ENCODE measurements at regions of chr2 and their contacts with region 1.

Region 1: DNA sequence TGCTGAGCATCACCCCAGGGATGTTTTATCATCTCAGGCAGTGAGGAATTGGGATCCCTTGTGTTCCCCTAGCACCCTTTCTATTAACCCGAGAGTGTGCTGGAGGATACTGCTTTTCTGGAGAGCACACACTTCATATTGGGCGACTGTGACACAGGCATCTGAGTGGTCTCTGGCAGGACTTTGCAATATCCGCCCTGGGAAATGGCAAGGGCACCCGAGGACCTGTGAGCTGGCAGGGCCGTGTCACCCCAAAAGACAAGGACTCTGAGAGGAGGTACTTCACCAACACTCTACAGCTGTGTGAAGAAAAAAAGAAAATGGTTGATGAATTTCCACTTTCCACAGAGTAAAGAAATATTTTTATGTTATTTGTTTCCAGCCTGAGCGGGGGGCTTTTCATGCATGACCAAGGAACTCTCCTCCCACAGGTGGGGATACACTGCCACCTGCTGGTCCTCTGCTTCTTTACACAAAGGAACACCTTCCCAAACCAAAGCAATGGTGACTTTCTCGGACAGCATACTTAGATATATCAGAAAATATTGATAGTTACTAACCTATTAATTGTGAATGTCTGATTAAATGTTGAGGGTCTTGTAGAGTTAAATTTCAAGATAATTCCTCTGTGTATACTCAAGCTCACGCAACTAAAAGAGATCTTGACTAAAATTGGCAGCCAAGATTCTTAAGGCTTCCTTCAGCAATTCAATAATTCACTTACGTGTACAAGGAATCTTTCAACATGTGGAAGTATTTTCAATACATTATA is 45.9 kb upstream of the REG3G start:
- DNase-seq: no peak
- ATAC-seq: peak; percentile 64
- H3K4me3 ChIP-seq: no peak overlapping the region
- H3K27ac ChIP-seq: no peak overlapping the region
- H3K4me1 ChIP-seq: peaks cover 33% of the 10 kb centered on the region
- H3K27me3 ChIP-seq: no peaks in the 10 kb centered on the region
- CTCF ChIP-seq: peak; percentile 79 to 91 (median 85)
- EP300 ChIP-seq: no peak
- POLR2A ChIP-seq: no peak
- RAD21 ChIP-seq: peak; percentile 91

Region 2: GRCh38 chr2:78281164-78281563 is 698.4 kb before region 1 on chr2:
- CTCF ChIA-PET with region 1: no interaction called
- POLR2A ChIA-PET with region 1: no interaction called
- RAD21 ChIA-PET with region 1: no interaction called
- SMC1A ChIA-PET with region 1: no interaction called
- in situ Hi-C with region 1: no loop called
- intact Hi-C with region 1: loop called (anchors 5 kb)
- DNase-seq: peak; percentile 15
- ATAC-seq: peak; percentile 98
- H3K4me3 ChIP-seq: no peak overlapping the region
- H3K27ac ChIP-seq: no peak overlapping the region
- H3K4me1 ChIP-seq: no peaks in the 10 kb centered on the region
- H3K27me3 ChIP-seq: no peaks in the 10 kb centered on the region
- CTCF ChIP-seq: no peak
- EP300 ChIP-seq: peak in 1 of 2 experiments; percentile 56; a peak in 1 of 4 replicates
- POLR2A ChIP-seq: no peak
- RAD21 ChIP-seq: no peak

Region 3: GRCh38 chr2:78431242-78431641 is 548.3 kb before region 1 on chr2:
- CTCF ChIA-PET with region 1: interaction called, 4 read pairs
- POLR2A ChIA-PET with region 1: no interaction called
- RAD21 ChIA-PET with region 1: no interaction called
- SMC1A ChIA-PET with region 1: interaction called, 3 read pairs
- in situ Hi-C with region 1: no loop called
- intact Hi-C with region 1: loop called (anchors 2 kb)
- DNase-seq: no peak
- ATAC-seq: peak; percentile 71
- H3K4me3 ChIP-seq: no peak overlapping the region
- H3K27ac ChIP-seq: no peak overlapping the region
- H3K4me1 ChIP-seq: no peaks in the 10 kb centered on the region
- H3K27me3 ChIP-seq: no peaks in the 10 kb centered on the region
- CTCF ChIP-seq: peak in 1 of 3 experiments; percentile 25; a peak in 1 of 6 replicates
- EP300 ChIP-seq: no peak
- POLR2A ChIP-seq: no peak
- RAD21 ChIP-seq: no peak

Region 4: DNA sequence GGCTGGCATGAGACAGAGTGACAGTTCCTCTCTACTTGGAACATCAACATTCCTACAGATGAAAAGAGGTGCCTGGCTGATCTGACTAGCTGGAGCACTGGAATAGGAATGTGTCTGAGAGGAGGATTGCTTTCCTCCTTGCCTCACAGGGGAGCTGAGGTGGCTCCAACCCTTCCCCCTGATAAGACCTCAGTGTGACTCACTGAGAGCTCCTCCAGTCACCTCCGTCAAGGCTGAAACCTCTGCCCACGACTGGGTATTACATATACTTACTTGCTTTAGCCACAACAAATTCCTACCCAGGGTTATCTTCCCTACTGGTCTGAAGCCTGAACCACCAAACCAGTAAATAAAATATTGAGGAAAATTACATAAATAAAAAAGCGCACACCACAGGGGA is 296.8 kb before region 1 on chr2:
- CTCF ChIA-PET with region 1: interaction called, 101 read pairs
- POLR2A ChIA-PET with region 1: no interaction called
- RAD21 ChIA-PET with region 1: no interaction called
- SMC1A ChIA-PET with region 1: interaction called, 3 read pairs
- in situ Hi-C with region 1: loop called (anchors 5 kb)
- intact Hi-C with region 1: no loop called
- DNase-seq: no peak
- ATAC-seq: no peak
- H3K4me3 ChIP-seq: no peak overlapping the region
- H3K27ac ChIP-seq: no peak overlapping the region
- H3K4me1 ChIP-seq: no peaks in the 10 kb centered on the region
- H3K27me3 ChIP-seq: no peaks in the 10 kb centered on the region
- CTCF ChIP-seq: no peak
- EP300 ChIP-seq: no peak
- POLR2A ChIP-seq: no peak
- RAD21 ChIP-seq: no peak

Region 5: GRCh38 chr2:78928502-78928901 is 51.1 kb before region 1 on chr2:
- CTCF ChIA-PET with region 1: interaction called, 3 read pairs
- POLR2A ChIA-PET with region 1: no interaction called
- RAD21 ChIA-PET with region 1: interaction called, 3 read pairs
- SMC1A ChIA-PET with region 1: interaction called, 3 read pairs
- in situ Hi-C with region 1: no loop called
- intact Hi-C with region 1: loop called (anchors 2 kb)
- DNase-seq: no peak
- ATAC-seq: peak; percentile 84
- H3K4me3 ChIP-seq: no peak overlapping the region
- H3K27ac ChIP-seq: no peak overlapping the region; the same call in 1 of the 2 replicates
- H3K4me1 ChIP-seq: no peaks in the 10 kb centered on the region
- H3K27me3 ChIP-seq: no peaks in the 10 kb centered on the region
- CTCF ChIP-seq: no peak
- EP300 ChIP-seq: no peak
- POLR2A ChIP-seq: no peak
- RAD21 ChIP-seq: no peak

Region 6: DNA sequence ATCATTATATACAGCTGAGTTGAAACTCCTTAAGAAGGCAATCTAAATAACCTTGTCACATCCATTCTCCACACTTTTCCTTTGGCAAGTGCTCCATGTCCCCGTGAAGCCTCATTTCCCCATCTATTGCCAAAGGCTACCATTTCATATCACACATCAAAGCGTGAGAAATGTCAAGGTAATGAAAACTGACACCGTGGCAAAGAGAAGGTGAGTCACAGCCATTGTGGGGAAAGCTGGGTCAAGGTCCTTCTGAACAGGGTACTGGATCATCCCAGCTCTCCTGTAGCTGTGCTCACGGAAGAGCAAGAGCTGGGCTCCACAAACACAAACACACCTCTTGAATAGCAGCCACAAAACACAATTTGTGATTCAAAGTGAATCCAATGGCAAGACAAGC is 12.3 kb before region 1 on chr2:
- CTCF ChIA-PET with region 1: interaction called, 51 read pairs
- POLR2A ChIA-PET with region 1: no interaction called
- RAD21 ChIA-PET with region 1: interaction called, 3 read pairs
- SMC1A ChIA-PET with region 1: interaction called, 5 read pairs
- in situ Hi-C with region 1: no loop called
- intact Hi-C with region 1: no loop called
- DNase-seq: no peak
- ATAC-seq: no peak
- H3K4me3 ChIP-seq: no peak overlapping the region
- H3K27ac ChIP-seq: no peak overlapping the region
- H3K4me1 ChIP-seq: no peaks in the 10 kb centered on the region
- H3K27me3 ChIP-seq: no peaks in the 10 kb centered on the region
- CTCF ChIP-seq: no peak
- EP300 ChIP-seq: no peak
- POLR2A ChIP-seq: no peak
- RAD21 ChIP-seq: no peak

Region 7: DNA sequence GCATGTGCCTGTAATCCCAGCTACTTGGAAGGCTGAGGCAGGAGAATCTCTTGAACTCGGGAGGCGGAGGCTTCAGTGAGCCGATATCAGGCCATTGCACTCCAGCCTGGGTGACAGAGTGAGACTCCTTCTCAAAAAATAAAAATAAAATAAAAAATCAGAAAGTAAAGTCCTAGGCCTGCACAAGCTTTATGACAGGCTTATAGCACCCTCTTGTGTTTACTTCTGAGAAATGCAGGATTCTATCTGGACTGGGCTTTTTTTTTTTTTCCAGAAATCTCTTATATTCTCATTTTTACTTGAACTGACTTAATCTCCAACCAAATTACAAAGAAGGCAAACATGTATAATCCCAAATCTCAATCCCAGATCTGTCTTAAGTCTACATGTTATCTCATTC is 19.8 kb after region 1 on chr2:
- CTCF ChIA-PET with region 1: interaction called, 22 read pairs
- POLR2A ChIA-PET with region 1: no interaction called
- RAD21 ChIA-PET with region 1: interaction called, 7 read pairs
- SMC1A ChIA-PET with region 1: interaction called, 10 read pairs
- in situ Hi-C with region 1: no loop called
- intact Hi-C with region 1: no loop called
- DNase-seq: no peak
- ATAC-seq: peak; percentile 65; the same call in 2 of the 3 replicates
- H3K4me3 ChIP-seq: no peak overlapping the region
- H3K27ac ChIP-seq: no peak overlapping the region
- H3K4me1 ChIP-seq: no peaks in the 10 kb centered on the region
- H3K27me3 ChIP-seq: no peaks in the 10 kb centered on the region; a peak in 2 of 4 replicates
- CTCF ChIP-seq: peak; percentile 33 to 44 (median 37); a peak in 5 of 6 replicates
- EP300 ChIP-seq: no peak
- POLR2A ChIP-seq: no peak
- RAD21 ChIP-seq: peak; percentile 56

Region 8: GRCh38 chr2:79702905-79703304 is 723.3 kb after region 1 on chr2:
- CTCF ChIA-PET with region 1: no interaction called
- POLR2A ChIA-PET with region 1: no interaction called
- RAD21 ChIA-PET with region 1: no interaction called
- SMC1A ChIA-PET with region 1: no interaction called
- in situ Hi-C with region 1: no loop called
- intact Hi-C with region 1: no loop called
- DNase-seq: no peak
- ATAC-seq: no peak
- H3K4me3 ChIP-seq: no peak overlapping the region
- H3K27ac ChIP-seq: no peak overlapping the region
- H3K4me1 ChIP-seq: no peaks in the 10 kb centered on the region
- H3K27me3 ChIP-seq: no peaks in the 10 kb centered on the region
- CTCF ChIP-seq: no peak
- EP300 ChIP-seq: no peak
- POLR2A ChIP-seq: no peak
- RAD21 ChIP-seq: no peak

Measured in GM12878 (cell line).